Activated CD4-positive, alpha-beta memory T cell treated with anti-CD3 and anti-CD28 coated beads, Interleukin-2, amount 10 ng/mL, durations not matched to agents 7 days and 5 days (primary cell): ENCODE measurements at regions of chr2 and their contacts with region 1.

Region 1: DNA sequence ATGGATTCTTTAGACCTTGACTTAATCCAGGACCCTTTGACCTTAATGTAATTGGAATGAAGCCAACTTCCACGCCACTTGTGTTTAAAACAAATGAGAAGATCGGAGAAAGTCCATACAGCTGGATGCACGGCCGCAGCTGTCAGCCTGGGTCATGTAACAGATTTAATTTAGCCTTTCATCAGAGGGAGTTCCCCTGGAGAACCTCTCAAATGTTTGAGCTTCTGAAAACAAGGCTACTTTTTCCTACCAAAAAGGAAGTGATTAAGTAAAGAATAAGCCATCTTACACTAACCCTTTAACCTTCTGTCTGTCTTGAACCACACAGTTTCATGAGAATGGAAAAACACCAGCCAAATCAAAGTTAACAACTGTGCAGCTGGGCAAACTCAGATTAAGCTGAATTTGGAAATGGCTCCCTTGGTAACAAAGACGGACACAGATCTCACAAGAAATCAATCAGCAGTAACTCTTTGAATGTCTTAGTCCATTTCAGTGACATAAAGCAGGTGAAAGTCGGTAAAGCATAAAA is 103.6 kb downstream of the DOCK10 start:
- DNase-seq: no peak
- H3K4me3 Mint-ChIP-seq: peak overlapping the region; percentile 46
- H3K27ac Mint-ChIP-seq: peak overlapping the region; percentile 76
- H3K4me1 Mint-ChIP-seq: peaks cover 80% of the 10 kb centered on the region
- H3K27me3 Mint-ChIP-seq: no peaks in the 10 kb centered on the region

Region 2: DNA sequence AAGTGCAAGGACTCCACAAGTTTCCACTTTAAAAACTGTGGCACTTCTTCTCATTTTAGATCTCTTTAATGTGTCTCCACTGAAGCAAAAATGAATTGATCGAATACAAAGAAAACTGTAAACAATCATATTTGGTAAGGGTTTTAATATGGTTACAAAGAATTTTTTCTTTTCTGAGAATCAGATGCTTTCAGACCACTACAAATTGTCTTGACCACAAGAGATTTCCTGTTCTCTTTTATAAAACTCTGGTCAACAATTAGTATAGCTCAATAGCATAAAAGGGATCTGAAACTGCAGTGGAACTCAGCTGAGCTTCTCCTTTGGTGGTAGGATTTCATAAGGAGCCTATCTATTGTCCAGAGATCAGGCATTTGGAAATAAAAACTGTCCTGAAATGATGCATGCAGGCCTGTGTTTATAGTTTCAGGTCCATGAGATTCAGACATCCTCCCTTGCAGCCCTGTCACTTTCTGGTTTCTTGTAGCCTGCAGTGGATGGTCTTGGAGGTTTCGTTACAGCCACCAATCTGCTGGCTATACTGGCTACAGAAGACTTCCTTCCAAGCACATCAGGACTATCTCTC is 16.5 kb before region 1 on chr2:
- CTCF ChIA-PET with region 1: interaction called, 13 read pairs
- POLR2A ChIA-PET with region 1: interaction called, 546 read pairs
- DNase-seq: no peak
- H3K4me3 Mint-ChIP-seq: peak overlapping the region; percentile 14
- H3K27ac Mint-ChIP-seq: peak overlapping the region; percentile 92
- H3K4me1 Mint-ChIP-seq: peaks cover 60% of the 10 kb centered on the region
- H3K27me3 Mint-ChIP-seq: no peaks in the 10 kb centered on the region

Region 3: GRCh38 chr2:225017713-225018112 is 79.0 kb after region 1 on chr2:
- CTCF ChIA-PET with region 1: no interaction called
- POLR2A ChIA-PET with region 1: no interaction called
- DNase-seq: no peak
- H3K4me3 Mint-ChIP-seq: no peak overlapping the region
- H3K27ac Mint-ChIP-seq: no peak overlapping the region
- H3K4me1 Mint-ChIP-seq: peaks cover 47% of the 10 kb centered on the region
- H3K27me3 Mint-ChIP-seq: no peaks in the 10 kb centered on the region